ENCODE measurements at regions of chr3 and their contacts with region 1.

Region 1: GRCh38 chr3:134794950-134795745 is at the start of gene EPHB1:
- DNase-seq: peak; percentile 93
- ATAC-seq: peak; percentile 91
- H3K4me3 Mint-ChIP-seq: peak within 1 kb of the TSS; percentile 96
- H3K27ac Mint-ChIP-seq: peak within 1 kb of the TSS; percentile 96
- H3K4me1 Mint-ChIP-seq: peaks cover 13% of the 10 kb centered on the region
- H3K27me3 Mint-ChIP-seq: peaks cover 70% of the 10 kb centered on the region
- CTCF ChIP-seq: peak; percentile 84
- total RNA-seq, gene EPHB1: 7.0 to 9.9 TPM (median 8.2 TPM) in 3 replicates

Region 2: DNA sequence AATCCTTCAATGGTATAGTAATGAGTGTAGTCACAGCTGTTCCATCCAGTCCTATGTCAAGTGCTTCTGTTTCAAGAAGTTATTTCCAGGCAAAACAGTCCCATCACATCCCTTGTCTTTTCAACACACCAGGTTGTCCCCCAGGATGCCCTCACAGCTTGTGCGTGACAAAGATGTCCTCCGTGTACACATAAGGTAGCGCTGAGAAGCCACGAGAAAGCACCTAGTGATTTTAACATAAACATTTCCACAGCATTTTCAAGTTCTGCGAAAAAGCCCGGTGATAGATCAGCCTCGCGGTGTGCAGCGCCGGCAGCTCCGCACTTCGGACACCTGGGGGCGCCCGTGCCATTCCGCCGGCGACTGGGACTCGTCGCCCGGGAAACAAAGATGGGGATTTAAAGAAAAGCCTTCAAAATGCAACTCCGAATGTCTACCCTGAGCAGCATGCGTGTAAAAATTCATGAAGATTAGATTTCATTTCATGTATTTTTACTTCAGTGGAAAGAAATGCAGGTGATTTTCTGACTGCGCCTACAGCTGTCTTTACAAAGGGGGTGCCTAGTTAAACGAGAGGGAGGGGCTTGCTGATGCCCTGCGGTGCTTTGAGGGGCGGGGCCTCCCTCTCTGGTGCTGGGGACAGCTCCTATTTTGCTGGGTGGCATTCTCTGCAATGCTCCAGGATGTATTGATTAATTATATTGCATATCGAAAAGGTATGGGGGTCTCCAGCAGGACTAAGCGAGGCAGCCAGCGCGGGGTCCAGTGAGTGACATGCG is 194.3 kb before region 1 on chr3:
- CTCF ChIA-PET with region 1: interaction called, 25 read pairs
- POLR2A ChIA-PET with region 1: no interaction called
- DNase-seq: peak; percentile 79
- ATAC-seq: peak; percentile 76
- H3K4me3 Mint-ChIP-seq: peak overlapping the region; percentile 65
- H3K27ac Mint-ChIP-seq: no peak overlapping the region
- H3K4me1 Mint-ChIP-seq: peaks cover 15% of the 10 kb centered on the region
- H3K27me3 Mint-ChIP-seq: peaks cover 12% of the 10 kb centered on the region
- CTCF ChIP-seq: peak; percentile 89

Region 3: GRCh38 chr3:134663721-134664456 is 131.3 kb before region 1 on chr3:
- CTCF ChIA-PET with region 1: no interaction called
- POLR2A ChIA-PET with region 1: no interaction called
- DNase-seq: no peak
- ATAC-seq: peak; percentile 13
- H3K4me3 Mint-ChIP-seq: no peak overlapping the region
- H3K27ac Mint-ChIP-seq: no peak overlapping the region
- H3K4me1 Mint-ChIP-seq: peaks cover 10% of the 10 kb centered on the region
- H3K27me3 Mint-ChIP-seq: peaks cover 3% of the 10 kb centered on the region; the same call in 1 of the 2 replicates
- CTCF ChIP-seq: no peak

Region 4: DNA sequence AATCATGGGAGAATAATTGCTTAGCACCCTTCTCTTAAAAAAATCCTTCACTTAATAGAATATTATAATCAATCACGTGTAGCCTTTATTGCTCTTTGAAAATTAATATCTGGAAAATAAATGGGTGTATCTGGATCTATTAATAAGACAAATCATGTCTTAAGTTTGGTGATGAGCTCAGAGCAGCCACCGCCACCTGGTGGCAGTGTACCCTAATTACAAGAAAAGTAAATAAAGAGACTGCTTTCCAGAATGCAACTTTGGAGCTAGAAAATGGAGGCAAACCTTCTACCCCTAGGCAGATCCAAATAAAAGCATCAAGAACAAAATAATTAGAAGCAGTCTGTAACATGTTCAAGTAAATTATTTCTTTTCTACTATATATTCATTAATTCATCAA is 43.5 kb after region 1 on chr3:
- CTCF ChIA-PET with region 1: interaction called, 85 read pairs
- POLR2A ChIA-PET with region 1: no interaction called
- DNase-seq: no peak
- ATAC-seq: no peak
- H3K4me3 Mint-ChIP-seq: no peak overlapping the region
- H3K27ac Mint-ChIP-seq: no peak overlapping the region
- H3K4me1 Mint-ChIP-seq: no peaks in the 10 kb centered on the region
- H3K27me3 Mint-ChIP-seq: peaks cover 7% of the 10 kb centered on the region
- CTCF ChIP-seq: peak; percentile 58

Region 5: GRCh38 chr3:135050536-135050935 is 255.4 kb after region 1 on chr3:
- CTCF ChIA-PET with region 1: interaction called, 10 read pairs
- POLR2A ChIA-PET with region 1: no interaction called
- DNase-seq: no peak
- ATAC-seq: peak; percentile 94
- H3K4me3 Mint-ChIP-seq: no peak overlapping the region
- H3K27ac Mint-ChIP-seq: no peak overlapping the region
- H3K4me1 Mint-ChIP-seq: peaks cover 16% of the 10 kb centered on the region
- H3K27me3 Mint-ChIP-seq: no peaks in the 10 kb centered on the region; the same call in 1 of the 2 replicates
- CTCF ChIP-seq: no peak

Region 6: GRCh38 chr3:135229018-135229495 is 433.9 kb after region 1 on chr3:
- CTCF ChIA-PET with region 1: interaction called, 57 read pairs
- POLR2A ChIA-PET with region 1: interaction called, 3 read pairs
- DNase-seq: peak; percentile 43
- ATAC-seq: peak; percentile 85
- H3K4me3 Mint-ChIP-seq: no peak overlapping the region
- H3K27ac Mint-ChIP-seq: no peak overlapping the region
- H3K4me1 Mint-ChIP-seq: peaks cover 42% of the 10 kb centered on the region
- H3K27me3 Mint-ChIP-seq: peaks cover 6% of the 10 kb centered on the region
- CTCF ChIP-seq: no peak

Region 7: DNA sequence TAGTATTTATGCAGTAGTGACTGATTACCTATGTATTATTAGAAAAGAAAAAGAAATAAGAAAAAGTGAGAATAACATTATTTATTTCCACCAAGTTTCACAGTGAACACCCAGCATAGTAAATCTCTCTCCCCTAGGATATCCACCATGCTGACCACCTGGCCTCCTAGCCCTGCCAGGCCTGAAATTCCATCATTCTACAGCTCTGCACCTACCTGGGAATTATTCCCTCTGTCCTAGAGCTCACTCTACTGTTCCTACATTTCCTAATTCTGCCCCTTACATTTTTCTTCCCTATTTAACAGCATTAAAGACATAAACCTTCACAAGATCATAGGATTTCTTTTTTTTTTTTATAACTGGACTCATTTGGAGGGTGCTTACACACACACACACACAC is 645.1 kb after region 1 on chr3:
- CTCF ChIA-PET with region 1: interaction called, 10 read pairs
- POLR2A ChIA-PET with region 1: no interaction called
- DNase-seq: no peak
- ATAC-seq: no peak
- H3K4me3 Mint-ChIP-seq: no peak overlapping the region
- H3K27ac Mint-ChIP-seq: peak overlapping the region; percentile 66; the same call in 1 of the 2 replicates
- H3K4me1 Mint-ChIP-seq: peaks cover 21% of the 10 kb centered on the region
- H3K27me3 Mint-ChIP-seq: no peaks in the 10 kb centered on the region
- CTCF ChIP-seq: no peak

Measured in WTC11 (cell line).